Right ventricle myocardium inferior (tissue), 1 donor: ENCODE measurements at regions of chr4 and their contacts with region 1.

Region 1: GRCh38 chr4:16264798-16265197 is 38.5 kb upstream of the TAPT1 start:
- DNase-seq: no peak
- ATAC-seq: no peak

Region 2: GRCh38 chr4:15805583-15806517 is 458.9 kb before region 1 on chr4:
- intact Hi-C with region 1: loop called (anchors 10 kb)
- DNase-seq: no peak
- ATAC-seq: peak; percentile 82

Region 3: GRCh38 chr4:15882675-15883086 is 382.1 kb before region 1 on chr4:
- intact Hi-C with region 1: loop called (anchors 5 kb)
- DNase-seq: no peak
- ATAC-seq: peak; percentile 89

Region 4: GRCh38 chr4:16026160-16026761 is 238.5 kb before region 1 on chr4:
- intact Hi-C with region 1: loop called (anchors 1 kb)
- DNase-seq: no peak
- ATAC-seq: no peak

Region 5: DNA sequence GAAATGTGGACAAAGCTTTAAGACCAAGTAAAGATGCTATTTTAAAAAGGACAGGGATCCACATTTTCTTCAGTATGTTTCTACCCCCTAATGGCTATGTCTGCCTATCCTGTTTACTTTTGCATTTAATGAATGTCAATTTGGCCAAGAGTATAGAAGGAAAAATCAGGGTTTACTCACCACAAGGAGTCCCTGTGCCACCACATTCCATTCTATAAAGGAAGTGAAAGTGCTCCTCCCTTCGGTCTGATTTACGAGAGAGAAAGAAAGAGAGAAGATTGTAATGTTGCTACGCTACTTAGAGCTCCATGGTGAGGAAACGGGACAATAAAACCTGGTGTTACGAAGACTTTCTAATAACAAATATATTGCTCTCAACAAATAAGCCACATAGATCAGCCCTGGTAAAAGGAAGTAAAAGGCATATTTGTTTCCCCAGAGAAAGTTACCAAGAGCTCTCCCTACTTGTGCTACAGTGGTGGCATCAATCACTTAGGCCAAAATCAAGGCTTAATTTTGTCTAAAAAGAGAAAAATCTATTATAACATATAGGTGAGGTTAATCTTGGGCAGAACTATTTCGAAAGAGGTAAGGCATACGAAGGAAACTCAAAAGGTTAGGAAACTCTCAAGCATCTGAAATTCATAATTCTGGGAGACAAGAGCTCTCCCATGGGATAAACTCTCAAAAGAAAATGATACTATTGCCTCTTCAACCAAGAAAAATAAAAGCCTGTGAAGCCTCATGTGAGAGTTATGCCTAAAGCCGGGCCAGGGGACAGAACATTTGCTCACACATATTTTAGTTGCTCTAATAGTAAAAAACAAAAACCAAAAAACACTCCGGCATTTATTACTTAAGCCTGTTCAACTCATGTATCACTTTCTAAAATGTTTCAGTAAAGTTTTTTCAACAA is 68.1 kb before region 1 on chr4:
- intact Hi-C with region 1: loop called (anchors 2 kb)
- DNase-seq: no peak
- ATAC-seq: peak; percentile 91